HepG2 (cell line): ENCODE measurements at regions of chr14 and their contacts with region 1.

Region 1: DNA sequence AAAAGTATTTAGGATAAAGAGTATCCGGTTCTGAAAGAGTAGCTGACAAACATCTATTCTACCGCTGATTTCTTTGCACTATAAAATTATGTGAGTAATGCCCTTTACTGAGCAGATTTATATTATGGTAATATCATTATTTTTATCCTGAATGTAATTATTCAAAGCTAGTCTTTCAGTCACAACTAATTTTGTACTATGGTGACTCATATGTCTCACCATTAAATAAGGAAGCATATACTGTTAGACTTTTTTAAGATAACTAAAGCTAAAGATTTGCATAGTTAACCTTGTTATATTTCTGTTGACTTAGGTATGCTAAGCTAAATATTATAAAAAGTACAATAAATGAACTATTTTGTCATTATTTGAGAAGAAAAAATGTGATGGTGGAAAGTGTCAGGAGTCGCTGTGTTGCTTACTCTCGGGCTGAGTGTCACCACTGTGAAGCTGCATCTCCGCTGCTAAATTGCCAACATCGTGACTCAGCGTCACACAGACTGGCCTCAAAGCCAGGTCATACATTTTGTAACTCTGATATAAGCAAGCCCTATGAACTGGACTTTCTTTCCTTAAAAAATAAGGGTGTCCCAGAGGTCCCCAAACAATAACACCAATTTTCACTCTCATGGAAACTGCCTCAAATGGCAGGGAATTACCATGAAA is 69.1 kb upstream of the SSTR1 start:
- DNase-seq: no peak
- ATAC-seq: peak; percentile 76
- H3K4me3 ChIP-seq: no peak overlapping the region
- H3K27ac ChIP-seq: no peak overlapping the region
- H3K4me1 ChIP-seq: no peaks in the 10 kb centered on the region
- H3K27me3 ChIP-seq: no peaks in the 10 kb centered on the region
- CTCF ChIP-seq: no peak
- EP300 ChIP-seq: no peak
- POLR2A ChIP-seq: no peak
- RAD21 ChIP-seq: no peak

Region 2: GRCh38 chr14:38208618-38209562 is 70.3 kb after region 1 on chr14:
- CTCF ChIA-PET with region 1: no interaction called
- POLR2A ChIA-PET with region 1: no interaction called
- in situ Hi-C with region 1: no loop called
- intact Hi-C with region 1: no loop called
- DNase-seq: peak; percentile 33
- ATAC-seq: peak; percentile 89
- H3K4me3 ChIP-seq: peak overlapping the region; percentile 13 to 47 (median 25); a peak in 5 of 6 replicates
- H3K27ac ChIP-seq: no peak overlapping the region
- H3K4me1 ChIP-seq: peaks cover 15% of the 10 kb centered on the region
- H3K27me3 ChIP-seq: peaks cover 5 to 47% of the 10 kb centered on the region in 2 experiments
- CTCF ChIP-seq: peak; percentile 50
- EP300 ChIP-seq: no peak
- POLR2A ChIP-seq: no peak
- RAD21 ChIP-seq: no peak

Region 3: DNA sequence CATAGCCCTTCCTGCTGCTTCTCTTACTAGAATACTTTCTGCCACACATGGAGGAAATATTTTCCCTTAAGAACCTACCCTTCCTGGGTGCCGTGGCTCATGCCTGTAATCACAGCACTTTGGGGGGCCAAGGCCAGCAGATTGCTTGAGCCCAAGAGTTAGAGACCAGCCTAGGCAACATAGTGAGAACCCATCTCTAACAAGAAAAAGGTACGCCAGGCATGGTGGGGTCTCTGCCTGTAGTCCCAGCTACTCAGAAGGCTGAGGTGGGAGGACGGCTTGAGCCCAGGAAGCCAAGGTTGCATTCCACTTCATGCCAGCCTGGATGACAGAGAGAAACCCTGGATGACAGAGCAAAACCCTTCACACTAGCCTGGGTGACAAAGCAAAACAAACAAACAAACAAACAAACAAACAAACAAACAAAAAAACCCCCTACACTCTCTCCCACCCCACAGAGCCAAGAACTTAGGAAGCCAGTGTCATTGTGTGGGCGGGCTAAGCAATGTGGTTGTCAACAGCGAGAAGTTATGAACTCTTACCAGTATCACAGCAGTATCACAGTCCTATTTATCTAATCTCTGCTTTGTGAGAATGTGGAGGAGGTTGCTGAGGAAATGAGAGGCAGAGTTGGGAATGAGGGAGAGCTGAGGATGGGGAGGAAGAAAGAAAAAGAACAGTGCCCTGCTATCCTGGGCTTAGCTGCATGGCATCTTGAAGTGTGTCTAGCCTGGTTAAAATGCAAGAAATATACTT is 171.1 kb after region 1 on chr14:
- CTCF ChIA-PET with region 1: no interaction called
- POLR2A ChIA-PET with region 1: no interaction called
- in situ Hi-C with region 1: no loop called
- intact Hi-C with region 1: loop called (anchors 10 kb)
- DNase-seq: no peak
- ATAC-seq: no peak
- H3K4me3 ChIP-seq: no peak overlapping the region
- H3K27ac ChIP-seq: no peak overlapping the region
- H3K4me1 ChIP-seq: no peaks in the 10 kb centered on the region
- H3K27me3 ChIP-seq: no peaks in the 10 kb centered on the region
- CTCF ChIP-seq: no peak
- EP300 ChIP-seq: no peak
- POLR2A ChIP-seq: no peak
- RAD21 ChIP-seq: no peak